ENCODE measurements at regions of chr10 and their contacts with region 1.

Region 1: GRCh38 chr10:6580279-6581029 is 378 bp upstream of the PRKCQ start:
- DNase-seq: peak; percentile 67 to 93 (median 86)
- ATAC-seq: peak; percentile 64
- H3K4me3 ChIP-seq: peak overlapping the region; percentile 78 to 89
- H3K4me3 Mint-ChIP-seq: peak overlapping the region; percentile 96
- H3K27ac ChIP-seq: peak overlapping the region; percentile 83 to 84
- H3K27ac Mint-ChIP-seq: peak overlapping the region; percentile 97
- H3K4me1 ChIP-seq: peaks cover 46% of the 10 kb centered on the region
- H3K4me1 Mint-ChIP-seq: peaks cover 68% of the 10 kb centered on the region
- H3K27me3 ChIP-seq: no peaks in the 10 kb centered on the region
- H3K27me3 Mint-ChIP-seq: no peaks in the 10 kb centered on the region
- CTCF ChIP-seq: peak; percentile 47

Region 2: DNA sequence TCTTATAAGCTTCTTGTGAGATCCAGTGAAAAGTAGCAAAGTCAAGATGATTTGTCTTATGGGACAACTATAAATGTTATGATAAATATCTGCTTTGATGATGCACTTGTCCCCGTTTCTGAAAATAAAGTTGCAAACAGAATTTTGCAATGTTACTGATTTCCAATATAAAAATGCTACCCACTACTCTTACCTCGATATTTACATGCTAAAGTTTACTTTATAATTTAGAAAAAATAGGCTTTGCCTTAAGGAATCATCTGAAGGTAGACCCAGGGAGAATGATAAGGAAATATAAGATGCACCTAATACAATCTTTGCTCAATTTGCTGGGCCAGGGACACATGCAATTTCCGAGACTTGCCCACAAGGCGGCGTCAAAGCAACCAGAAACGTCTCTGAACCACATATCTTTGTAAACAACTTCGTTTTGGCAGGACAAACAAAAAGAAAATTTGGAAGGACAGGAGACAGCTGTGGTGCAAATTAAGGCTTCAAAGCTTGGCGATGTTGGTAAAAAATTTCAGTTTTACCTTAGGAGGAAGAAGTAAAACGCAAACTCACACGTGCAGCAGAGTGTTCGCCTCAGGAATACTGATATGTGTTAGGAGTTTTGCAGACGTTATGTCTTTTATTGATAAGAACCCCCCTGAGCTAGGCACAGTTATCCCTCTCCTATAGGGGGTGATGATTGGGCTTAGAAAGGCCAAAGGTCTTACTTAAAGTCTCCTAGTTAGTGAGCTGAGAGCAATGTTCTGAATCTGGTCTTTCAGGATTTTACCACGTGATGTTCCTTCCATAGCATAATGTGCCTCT is 134.7 kb before region 1 on chr10:
- CTCF ChIA-PET with region 1: interaction called, 6 read pairs
- POLR2A ChIA-PET with region 1: no interaction called
- intact Hi-C with region 1: loop called in 1 of 2 experiments (anchors 1 kb)
- DNase-seq: peak; percentile 36 to 76 (median 64)
- ATAC-seq: peak; percentile 58
- H3K4me3 ChIP-seq: no peak overlapping the region
- H3K4me3 Mint-ChIP-seq: no peak overlapping the region
- H3K27ac ChIP-seq: peak overlapping the region in 1 of 2 experiments; percentile 47
- H3K27ac Mint-ChIP-seq: peak overlapping the region; percentile 83
- H3K4me1 ChIP-seq: peaks cover 8% of the 10 kb centered on the region
- H3K4me1 Mint-ChIP-seq: peaks cover 22% of the 10 kb centered on the region
- H3K27me3 ChIP-seq: no peaks in the 10 kb centered on the region
- H3K27me3 Mint-ChIP-seq: no peaks in the 10 kb centered on the region
- CTCF ChIP-seq: peak; percentile 73

Region 3: DNA sequence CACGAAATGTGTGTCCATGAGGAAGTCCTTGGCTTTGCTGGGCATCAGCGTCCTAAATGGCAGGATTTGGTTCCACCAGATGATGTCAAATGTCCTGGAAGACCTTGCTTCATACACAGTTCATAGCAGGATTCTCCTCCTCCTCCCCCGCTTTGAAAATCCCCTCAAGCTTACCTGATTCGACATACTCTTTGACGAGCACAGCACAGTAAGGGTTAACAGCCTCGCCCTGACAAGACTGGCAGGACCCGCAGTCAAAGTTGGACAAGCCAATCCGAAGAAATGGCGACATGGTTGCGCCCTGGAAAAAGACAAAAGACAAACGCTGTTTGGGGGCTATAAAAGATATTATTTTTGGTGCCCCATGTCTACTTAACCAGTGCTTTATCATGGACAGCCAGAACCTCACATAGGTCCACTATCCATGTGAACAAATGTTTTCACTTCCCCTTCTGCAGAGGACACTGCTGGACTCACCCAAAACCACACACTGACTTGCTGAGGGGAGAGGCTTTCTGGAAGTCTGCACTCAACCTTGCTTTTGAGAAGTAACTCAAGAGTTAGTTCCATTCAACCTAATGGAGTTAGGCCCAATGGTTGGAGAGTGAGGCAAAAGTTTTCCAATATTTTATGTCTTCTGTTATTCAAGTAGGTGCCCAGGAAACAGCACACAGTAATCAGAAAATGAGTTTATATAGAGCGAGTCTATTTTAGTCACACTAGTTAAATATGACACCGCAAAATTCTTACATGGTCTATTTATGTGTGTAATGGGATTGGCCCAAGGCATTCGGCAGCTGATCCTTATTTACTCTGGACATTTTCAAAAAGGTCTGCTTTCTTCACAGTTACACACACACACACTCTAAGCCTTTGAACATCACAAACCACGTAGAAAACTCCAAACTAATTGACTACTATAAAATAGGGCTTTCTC is 65.3 kb before region 1 on chr10:
- CTCF ChIA-PET with region 1: interaction called, 11 read pairs
- POLR2A ChIA-PET with region 1: interaction called, 3 read pairs
- intact Hi-C with region 1: loop called in 1 of 2 experiments (anchors 2 kb)
- DNase-seq: no peak
- ATAC-seq: no peak
- H3K4me3 ChIP-seq: no peak overlapping the region
- H3K4me3 Mint-ChIP-seq: no peak overlapping the region
- H3K27ac ChIP-seq: peak overlapping the region in 1 of 2 experiments; percentile 33
- H3K27ac Mint-ChIP-seq: peak overlapping the region; percentile 65
- H3K4me1 ChIP-seq: peaks cover 43% of the 10 kb centered on the region
- H3K4me1 Mint-ChIP-seq: peaks cover 79% of the 10 kb centered on the region
- H3K27me3 ChIP-seq: no peaks in the 10 kb centered on the region
- H3K27me3 Mint-ChIP-seq: no peaks in the 10 kb centered on the region
- CTCF ChIP-seq: no peak

Region 4: DNA sequence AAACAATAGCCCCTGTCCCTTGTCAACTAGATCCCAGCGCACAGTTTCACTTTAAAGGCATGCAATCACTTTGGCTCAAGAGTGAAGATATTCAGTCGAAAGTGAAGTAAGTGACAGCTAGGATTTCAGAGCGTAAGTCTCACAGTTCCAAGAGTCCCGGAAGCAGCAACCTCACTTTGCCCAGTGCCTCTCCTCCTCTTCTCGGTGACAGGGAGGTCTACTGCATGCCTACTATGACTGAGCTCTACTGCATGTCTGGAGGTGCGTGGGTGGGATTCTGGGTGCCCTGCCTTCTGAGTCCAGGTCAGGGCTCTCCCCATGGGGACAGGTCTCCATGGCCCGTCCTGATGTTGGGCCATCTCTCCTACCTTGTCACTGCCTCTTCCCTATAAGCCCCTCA is 17.4 kb before region 1 on chr10:
- CTCF ChIA-PET with region 1: interaction called, 14 read pairs
- POLR2A ChIA-PET with region 1: interaction called, 12 read pairs
- intact Hi-C with region 1: loop called in 1 of 2 experiments (anchors 1 kb)
- DNase-seq: peak in 5 of 9 experiments; percentile 6 to 68 (median 44)
- ATAC-seq: peak; percentile 64
- H3K4me3 ChIP-seq: no peak overlapping the region
- H3K4me3 Mint-ChIP-seq: peak overlapping the region; percentile 57
- H3K27ac ChIP-seq: peak overlapping the region; percentile 7 to 63
- H3K27ac Mint-ChIP-seq: peak overlapping the region; percentile 80
- H3K4me1 ChIP-seq: peaks cover 79% of the 10 kb centered on the region
- H3K4me1 Mint-ChIP-seq: peaks cover 91% of the 10 kb centered on the region
- H3K27me3 ChIP-seq: no peaks in the 10 kb centered on the region
- H3K27me3 Mint-ChIP-seq: no peaks in the 10 kb centered on the region
- CTCF ChIP-seq: no peak

Region 5: GRCh38 chr10:6607778-6608177 is 27.3 kb after region 1 on chr10:
- CTCF ChIA-PET with region 1: interaction called, 5 read pairs
- POLR2A ChIA-PET with region 1: interaction called, 3 read pairs
- intact Hi-C with region 1: loop called in 1 of 2 experiments (anchors 5 kb)
- DNase-seq: no peak
- ATAC-seq: no peak
- H3K4me3 ChIP-seq: no peak overlapping the region
- H3K4me3 Mint-ChIP-seq: no peak overlapping the region
- H3K27ac ChIP-seq: peak overlapping the region in 1 of 2 experiments; percentile 73
- H3K27ac Mint-ChIP-seq: peak overlapping the region; percentile 96
- H3K4me1 ChIP-seq: peaks cover 42% of the 10 kb centered on the region
- H3K4me1 Mint-ChIP-seq: peaks cover 70% of the 10 kb centered on the region
- H3K27me3 ChIP-seq: no peaks in the 10 kb centered on the region
- H3K27me3 Mint-ChIP-seq: no peaks in the 10 kb centered on the region
- CTCF ChIP-seq: no peak

Region 6: GRCh38 chr10:6678211-6678803 is 97.9 kb after region 1 on chr10:
- CTCF ChIA-PET with region 1: interaction called, 6 read pairs
- POLR2A ChIA-PET with region 1: no interaction called
- intact Hi-C with region 1: loop called in 1 of 2 experiments (anchors 1 kb)
- DNase-seq: peak; percentile 23 to 78 (median 68)
- ATAC-seq: peak; percentile 52
- H3K4me3 ChIP-seq: no peak overlapping the region
- H3K4me3 Mint-ChIP-seq: no peak overlapping the region
- H3K27ac ChIP-seq: no peak overlapping the region
- H3K27ac Mint-ChIP-seq: no peak overlapping the region
- H3K4me1 ChIP-seq: no peaks in the 10 kb centered on the region
- H3K4me1 Mint-ChIP-seq: peaks cover 4% of the 10 kb centered on the region
- H3K27me3 ChIP-seq: no peaks in the 10 kb centered on the region
- H3K27me3 Mint-ChIP-seq: no peaks in the 10 kb centered on the region
- CTCF ChIP-seq: peak; percentile 71